Pancreas (tissue), 10 donors: ENCODE measurements at regions of chr2 and their contacts with region 1.

Region 1: DNA sequence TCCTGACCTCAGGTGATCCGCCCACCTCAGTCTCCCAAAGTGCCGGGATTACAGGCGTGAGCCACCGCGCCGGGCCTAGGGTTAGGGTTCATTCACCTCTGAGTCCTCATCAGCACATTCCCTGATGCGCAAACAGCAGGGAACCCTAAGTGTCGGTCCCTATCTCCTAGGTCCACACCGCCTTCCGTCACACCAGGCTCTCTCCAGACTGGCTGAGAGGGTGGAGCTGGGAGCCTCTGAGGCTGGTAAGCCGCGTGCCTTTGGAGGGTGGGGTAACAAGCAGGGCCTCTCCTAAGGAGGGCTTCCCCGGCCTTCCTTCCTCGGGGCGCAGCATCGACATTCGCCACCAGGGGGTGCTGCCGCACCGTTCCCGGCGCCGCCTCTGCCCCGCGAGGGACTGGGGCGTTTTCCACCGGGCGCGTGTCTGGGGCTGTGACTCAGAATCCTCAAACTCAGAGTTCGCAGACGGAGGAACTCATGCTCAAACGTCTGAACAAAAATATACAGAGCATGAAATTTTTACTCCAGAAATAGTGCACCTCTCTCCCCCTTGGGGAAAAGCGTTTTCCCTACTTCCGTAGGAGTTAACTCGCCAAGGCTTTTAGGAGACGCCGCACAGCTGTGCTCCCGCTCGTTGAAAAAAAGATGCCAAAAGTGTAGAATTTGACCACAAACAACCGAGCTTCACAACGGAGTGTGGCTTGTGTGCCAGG is 63.9 kb upstream of the ASAP2 start:
- DNase-seq: peak; percentile 62 to 97 (median 84)
- ATAC-seq: peak; percentile 88 to 96 (median 94)
- H3K4me3 ChIP-seq: peak overlapping the region in 2 of 4 donors; percentile 20 to 40
- H3K27ac ChIP-seq: no peak overlapping the region
- H3K4me1 ChIP-seq: peaks cover 0 to 5% (median 0%) of the 10 kb centered on the region in 3 donors
- H3K27me3 ChIP-seq: no peaks in the 10 kb centered on the region
- CTCF ChIP-seq: peak; percentile 96 to 99 (median 98)

Region 2: DNA sequence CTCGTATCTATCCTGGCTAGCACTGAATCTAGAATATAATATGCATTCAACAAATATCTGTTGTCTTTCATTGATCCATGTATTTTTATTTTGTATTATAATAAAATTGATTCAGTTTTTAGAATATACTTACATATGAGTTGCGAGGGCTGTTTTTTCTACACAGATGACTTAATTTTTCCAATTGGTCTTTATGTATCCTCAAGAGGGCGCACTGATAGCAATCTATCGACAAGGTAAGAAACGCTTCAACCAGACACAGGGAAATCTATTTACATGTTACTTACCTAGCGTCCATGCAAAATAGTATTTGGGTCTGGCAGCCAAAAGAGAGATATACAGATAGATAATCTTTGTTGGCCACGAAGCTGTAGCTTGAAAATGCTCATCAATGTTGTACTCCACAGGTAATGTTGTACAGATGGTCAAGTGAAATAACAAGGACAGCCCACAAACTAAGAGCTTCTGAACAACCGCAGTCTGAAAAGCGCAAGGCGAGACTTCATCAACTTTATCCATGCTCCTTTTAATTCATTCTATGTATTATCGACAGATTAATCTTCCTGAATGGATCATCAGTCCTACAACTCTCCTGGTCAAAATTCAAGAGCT is 269.8 kb before region 1 on chr2:
- intact Hi-C with region 1: loop called in 1 of 3 experiments (anchors 5 kb)
- DNase-seq: no peak
- ATAC-seq: peak in 3 of 4 donors; percentile 59 to 78 (median 72)
- H3K4me3 ChIP-seq: no peak overlapping the region
- H3K27ac ChIP-seq: no peak overlapping the region
- H3K4me1 ChIP-seq: no peaks in the 10 kb centered on the region
- H3K27me3 ChIP-seq: no peaks in the 10 kb centered on the region
- CTCF ChIP-seq: peak in 3 of 4 donors; percentile 27 to 36 (median 31)

Region 3: DNA sequence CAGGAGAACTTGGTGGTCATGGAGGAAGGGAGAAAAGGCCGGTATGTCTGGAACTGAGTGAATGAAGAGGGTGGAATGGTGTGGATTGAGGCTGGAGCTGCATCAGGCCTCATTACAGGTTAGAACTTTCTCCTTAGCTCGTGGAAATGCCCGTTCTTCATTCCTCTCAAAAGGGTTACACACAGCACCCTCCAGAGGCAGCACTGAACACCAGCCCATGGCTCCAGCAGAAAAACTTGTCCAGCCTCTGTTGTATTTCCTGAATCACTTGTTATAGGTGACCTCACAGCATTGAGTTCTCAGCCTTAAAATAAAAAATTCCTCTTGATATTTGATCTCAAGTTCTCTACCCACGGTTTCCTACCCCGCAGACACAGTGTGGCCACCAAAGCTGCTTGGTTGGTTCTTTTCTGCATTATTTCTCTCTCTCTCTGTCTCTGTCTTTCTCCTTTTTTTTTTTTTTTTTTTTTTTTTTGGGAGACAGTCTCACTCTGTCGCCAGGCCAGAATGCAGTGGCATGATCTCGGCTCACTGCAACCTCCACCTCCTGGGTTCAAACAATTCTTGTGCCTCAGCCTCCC is 191.0 kb after region 1 on chr2:
- intact Hi-C with region 1: loop called in 2 of 3 experiments (anchors 5 to 10 kb)
- DNase-seq: peak in 4 of 6 donors; percentile 37 to 66 (median 58)
- ATAC-seq: peak; percentile 75 to 96 (median 88)
- H3K4me3 ChIP-seq: no peak overlapping the region
- H3K27ac ChIP-seq: no peak overlapping the region
- H3K4me1 ChIP-seq: no peaks in the 10 kb centered on the region
- H3K27me3 ChIP-seq: no peaks in the 10 kb centered on the region
- CTCF ChIP-seq: peak in 3 of 4 donors; percentile 37 to 40 (median 39)